ENCODE measurements at regions of chr4 and their contacts with region 1.

Region 1: DNA sequence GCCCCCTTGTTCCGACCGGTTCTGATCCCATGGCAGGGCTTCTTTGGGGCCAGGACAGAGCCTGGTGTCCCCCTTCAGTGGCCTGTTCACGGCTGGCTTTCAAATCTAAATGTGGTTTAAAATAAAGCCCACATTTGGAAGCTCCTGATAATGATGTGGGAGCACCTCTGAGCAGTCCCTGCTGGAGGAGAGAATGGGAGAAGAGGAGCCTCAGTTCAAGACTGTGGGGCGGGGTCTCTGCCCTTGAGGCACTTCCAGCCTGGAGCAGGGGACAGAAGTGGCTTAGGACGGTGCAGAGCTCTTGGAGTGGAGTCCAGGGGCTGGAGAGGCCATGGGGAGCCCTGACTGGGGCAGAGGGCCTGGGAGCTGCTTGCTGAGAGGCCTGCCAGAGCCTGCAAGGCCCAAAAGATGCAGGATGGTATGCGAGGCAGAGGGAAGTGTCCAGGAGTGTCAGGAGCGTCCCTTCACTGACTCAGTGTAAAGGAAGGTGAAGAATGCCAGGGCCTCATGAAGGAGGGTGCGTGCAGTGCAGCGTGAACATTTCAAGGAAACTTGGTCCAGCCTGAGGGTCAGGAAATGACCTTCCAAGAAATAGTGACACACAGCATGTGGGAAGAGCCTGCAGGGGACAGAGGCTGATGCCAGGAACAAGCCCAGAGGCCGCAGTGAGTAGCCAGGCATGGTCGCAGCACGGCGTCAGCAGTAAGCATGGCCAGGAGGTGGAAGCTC is 21.1 kb upstream of the TADA2B start:
- DNase-seq: peak; percentile 8
- H3K4me3 ChIP-seq: no peak overlapping the region
- CTCF ChIP-seq: no peak

Region 2: DNA sequence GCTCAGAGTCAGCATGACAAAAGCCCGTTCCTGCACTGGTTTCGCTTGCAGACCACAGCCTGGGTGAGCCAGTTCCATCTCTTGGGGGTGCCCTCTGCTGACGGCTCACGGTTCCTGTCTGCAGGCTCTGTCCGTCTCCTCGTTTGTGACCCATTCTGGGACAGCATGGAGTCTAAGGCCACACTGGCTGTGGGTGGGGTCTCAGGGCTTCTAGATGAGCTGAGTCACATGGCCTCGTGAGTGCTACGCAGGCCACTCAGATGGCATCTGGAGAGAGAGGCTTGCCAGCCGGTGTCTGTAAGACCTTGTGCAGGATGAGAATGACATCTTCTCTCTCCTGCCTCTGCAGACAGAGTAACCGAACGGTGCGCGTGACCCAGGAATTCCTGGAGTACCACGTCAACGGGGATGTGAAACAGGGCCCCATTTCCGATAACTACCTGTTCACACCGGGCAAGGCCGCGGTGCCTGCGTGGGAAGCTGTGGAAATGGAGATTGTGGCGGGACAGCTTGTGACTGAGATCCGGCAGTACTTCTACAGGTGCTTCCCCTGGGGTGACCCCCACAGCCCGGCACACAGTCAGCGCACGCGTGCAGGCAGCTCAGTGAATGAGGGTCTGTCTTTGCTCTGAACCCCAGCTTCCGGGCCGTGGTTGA is 413.2 kb before region 1 on chr4:
- in situ Hi-C with region 1: no loop called
- DNase-seq: no peak
- H3K4me3 ChIP-seq: no peak overlapping the region
- CTCF ChIP-seq: peak; percentile 9

Region 3: GRCh38 chr4:6986781-6987587 is 35.1 kb before region 1 on chr4:
- in situ Hi-C with region 1: loop called (anchors 5 kb)
- DNase-seq: peak; percentile 74
- H3K4me3 ChIP-seq: peak overlapping the region; percentile 70
- CTCF ChIP-seq: no peak

Measured in astrocyte of the cerebellum (primary cell).